ENCODE measurements at regions of chr18 and their contacts with region 1.

Region 1: GRCh38 chr18:48460929-48461583 is 51.9 kb upstream of the ZBTB7C start:
- DNase-seq: no peak
- H3K4me3 Mint-ChIP-seq: no peak overlapping the region
- H3K27ac Mint-ChIP-seq: no peak overlapping the region
- H3K4me1 Mint-ChIP-seq: peaks cover 5% of the 10 kb centered on the region
- H3K27me3 Mint-ChIP-seq: peaks cover 26% of the 10 kb centered on the region

Region 2: GRCh38 chr18:48422947-48423378 is 38.1 kb before region 1 on chr18:
- intact Hi-C with region 1: loop called (anchors 1 kb)
- DNase-seq: no peak
- H3K4me3 Mint-ChIP-seq: no peak overlapping the region
- H3K27ac Mint-ChIP-seq: no peak overlapping the region
- H3K4me1 Mint-ChIP-seq: no peaks in the 10 kb centered on the region
- H3K27me3 Mint-ChIP-seq: peaks cover 31% of the 10 kb centered on the region

Region 3: GRCh38 chr18:49094979-49095632 is 634.0 kb after region 1 on chr18:
- intact Hi-C with region 1: no loop called
- DNase-seq: no peak
- H3K4me3 Mint-ChIP-seq: no peak overlapping the region
- H3K27ac Mint-ChIP-seq: no peak overlapping the region
- H3K4me1 Mint-ChIP-seq: peaks cover 6% of the 10 kb centered on the region
- H3K27me3 Mint-ChIP-seq: no peaks in the 10 kb centered on the region